ENCODE measurements at regions of chr3 and their contacts with region 1.

Region 1: GRCh38 chr3:49295489-49296058 is 18.5 kb upstream of the C3orf62 start:
- DNase-seq: peak in 1 of 4 donors; percentile 22
- ATAC-seq: peak; percentile 54
- H3K4me3 ChIP-seq: no peak overlapping the region
- H3K27ac ChIP-seq: no peak overlapping the region
- H3K4me1 ChIP-seq: peaks cover 3 to 23% of the 10 kb centered on the region in 2 donors
- H3K27me3 ChIP-seq: no peaks in the 10 kb centered on the region
- CTCF ChIP-seq: peak; percentile 50 to 61

Region 2: DNA sequence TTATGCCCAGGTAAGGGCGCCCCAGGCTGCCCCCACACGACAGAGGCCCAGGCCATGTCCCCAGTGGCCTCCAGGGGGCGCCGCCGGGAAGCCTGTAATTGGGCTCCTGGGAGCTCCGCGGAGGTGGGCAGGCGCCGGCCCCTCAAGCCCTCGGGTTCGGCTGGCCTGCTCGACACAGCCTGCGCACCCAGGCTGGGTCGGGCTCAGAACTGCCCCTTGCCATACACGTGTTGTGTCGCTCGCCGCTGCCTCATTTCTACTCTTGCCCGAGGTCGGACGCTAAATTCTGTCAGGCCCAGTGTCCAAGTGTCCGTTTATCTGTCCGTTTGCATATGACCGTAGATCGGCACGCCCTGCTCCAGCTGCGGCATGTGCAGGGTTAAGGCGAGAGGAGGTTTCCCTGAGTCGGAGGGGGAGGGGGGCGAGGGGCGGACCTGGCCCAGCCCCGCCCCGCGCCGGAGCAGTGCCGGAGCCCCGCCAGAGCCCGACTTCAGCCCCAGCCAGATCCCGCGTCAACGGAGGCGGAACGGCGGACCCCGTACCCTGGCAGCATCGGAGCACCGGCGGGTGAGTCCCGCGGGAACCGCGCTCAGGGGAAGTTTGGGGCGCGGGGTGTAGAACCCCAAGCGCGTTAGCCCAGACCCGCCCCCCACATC is 124.3 kb before region 1 on chr3 and contains the start of gene KLHDC8B:
- intact Hi-C with region 1: loop called in 1 of 2 experiments (anchors 10 kb)
- DNase-seq: peak; percentile 86 to 97 (median 92)
- ATAC-seq: peak; percentile 94
- H3K4me3 ChIP-seq: peak within 1 kb of the TSS; percentile 50 to 72
- H3K27ac ChIP-seq: peak within 1 kb of the TSS; percentile 76 to 78
- H3K4me1 ChIP-seq: peaks cover 15 to 42% of the 10 kb centered on the region in 2 donors
- H3K27me3 ChIP-seq: no peaks in the 10 kb centered on the region
- CTCF ChIP-seq: peak; percentile 98
- polyA plus RNA-seq, gene KLHDC8B: 40.0 to 51.7 (median 46.7) TPM

Region 3: DNA sequence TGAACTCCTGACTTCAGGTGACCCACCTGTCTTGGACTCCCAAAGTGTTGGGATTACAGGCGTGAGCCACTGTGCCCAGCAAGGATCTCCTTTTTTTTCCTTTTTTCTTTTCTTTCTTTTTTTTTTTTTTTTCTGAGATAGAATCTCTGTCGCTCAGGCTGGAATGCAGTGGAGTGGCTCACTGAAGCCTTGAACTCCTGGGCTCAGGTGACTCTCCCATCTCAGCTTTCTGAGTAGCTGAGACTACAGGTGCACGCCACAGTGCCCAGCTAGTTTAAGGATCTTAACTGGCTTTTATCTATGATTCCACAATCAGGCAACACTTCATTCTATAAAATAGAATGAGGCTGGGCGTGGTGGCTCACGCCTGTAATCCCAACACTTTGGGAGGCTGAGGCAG is 149.8 kb after region 1 on chr3:
- intact Hi-C with region 1: loop called in 1 of 2 experiments (anchors 10 kb)
- DNase-seq: no peak
- ATAC-seq: peak; percentile 9
- H3K4me3 ChIP-seq: no peak overlapping the region
- H3K27ac ChIP-seq: peak overlapping the region; percentile 13 to 70
- H3K4me1 ChIP-seq: peaks cover 0 to 38% of the 10 kb centered on the region in 2 donors
- H3K27me3 ChIP-seq: no peaks in the 10 kb centered on the region
- CTCF ChIP-seq: no peak